ENCODE measurements at regions of chr5 and their contacts with region 1.

Region 1: GRCh38 chr5:14581333-14581890 is at the start of gene OTULINL:
- DNase-seq: peak; percentile 80
- ATAC-seq: peak; percentile 98
- H3K4me3 Mint-ChIP-seq: peak within 1 kb of the TSS; percentile 74
- H3K27ac Mint-ChIP-seq: no peak within 1 kb of the TSS
- H3K4me1 Mint-ChIP-seq: peaks cover 3% of the 10 kb centered on the region
- H3K27me3 Mint-ChIP-seq: peaks cover 25% of the 10 kb centered on the region
- CTCF ChIP-seq: no peak
- total RNA-seq, gene OTULINL: 0.27 and 0.69 TPM in 2 replicates

Region 2: GRCh38 chr5:14560091-14560595 is 21.3 kb before region 1 on chr5:
- CTCF ChIA-PET with region 1: no interaction called
- POLR2A ChIA-PET with region 1: no interaction called
- intact Hi-C with region 1: loop called (anchors 2 kb)
- DNase-seq: no peak
- ATAC-seq: peak; percentile 67
- H3K4me3 Mint-ChIP-seq: peak overlapping the region; percentile 68
- H3K27ac Mint-ChIP-seq: peak overlapping the region; percentile 47
- H3K4me1 Mint-ChIP-seq: peaks cover 20% of the 10 kb centered on the region
- H3K27me3 Mint-ChIP-seq: peaks cover 10% of the 10 kb centered on the region
- CTCF ChIP-seq: no peak

Region 3: GRCh38 chr5:14871210-14872069 is 290.0 kb after region 1 on chr5 and contains the start of gene ANKH:
- CTCF ChIA-PET with region 1: no interaction called
- POLR2A ChIA-PET with region 1: no interaction called
- intact Hi-C with region 1: loop called (anchors 2 kb)
- DNase-seq: peak; percentile 86
- ATAC-seq: peak; percentile 88
- H3K4me3 Mint-ChIP-seq: peak within 1 kb of the TSS; percentile 87
- H3K27ac Mint-ChIP-seq: peak within 1 kb of the TSS; percentile 80
- H3K4me1 Mint-ChIP-seq: peaks cover 22% of the 10 kb centered on the region
- H3K27me3 Mint-ChIP-seq: no peaks in the 10 kb centered on the region
- CTCF ChIP-seq: no peak
- total RNA-seq, gene ANKH: 43.3 and 43.7 TPM in 2 replicates

Region 4: GRCh38 chr5:14996997-14997396 is 415.6 kb after region 1 on chr5:
- CTCF ChIA-PET with region 1: no interaction called
- POLR2A ChIA-PET with region 1: no interaction called
- intact Hi-C with region 1: loop called (anchors 5 kb)
- DNase-seq: no peak
- ATAC-seq: peak; percentile 76
- H3K4me3 Mint-ChIP-seq: peak overlapping the region; percentile 15
- H3K27ac Mint-ChIP-seq: peak overlapping the region; percentile 75
- H3K4me1 Mint-ChIP-seq: peaks cover 59% of the 10 kb centered on the region
- H3K27me3 Mint-ChIP-seq: no peaks in the 10 kb centered on the region
- CTCF ChIP-seq: no peak